Endothelial cell of umbilical vein (primary cell): ENCODE measurements at regions of chr1 and their contacts with region 1.

Region 1: DNA sequence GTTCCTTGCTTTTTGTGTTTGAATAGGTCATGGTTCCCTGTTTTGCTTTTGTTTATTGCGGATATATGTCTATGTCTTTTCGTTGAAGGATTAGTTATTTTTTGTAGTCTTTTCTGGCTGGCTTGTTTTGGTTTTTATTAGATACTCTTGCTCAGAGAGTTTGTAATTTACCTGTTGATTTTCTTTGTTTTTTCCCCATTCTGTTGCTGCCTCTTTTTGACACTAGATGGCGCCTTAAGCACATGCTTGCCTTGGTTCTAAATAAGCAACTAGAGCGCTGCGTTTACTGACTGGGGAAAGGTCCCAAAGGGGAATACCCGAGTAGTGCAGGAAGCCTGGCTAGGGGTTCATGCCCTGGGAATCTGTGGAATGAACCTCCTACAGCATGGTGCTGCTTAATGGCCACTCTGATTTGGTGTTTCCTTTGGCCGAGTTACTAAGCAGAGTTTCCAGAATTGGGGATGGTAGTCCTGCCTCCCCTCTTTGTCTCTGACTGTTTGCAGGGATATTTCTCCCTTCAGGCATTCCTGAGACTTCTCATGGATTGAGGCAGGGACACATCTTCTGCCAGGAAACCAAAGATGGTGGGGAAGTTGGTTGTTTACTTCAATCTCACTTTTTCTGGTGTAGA is 143.2 kb downstream of the PTPRU start:
- DNase-seq: peak; percentile 65
- H3K4me3 ChIP-seq: no peak overlapping the region
- H3K27ac ChIP-seq: no peak overlapping the region
- H3K4me1 ChIP-seq: peaks cover 13% of the 10 kb centered on the region
- H3K27me3 ChIP-seq: no peaks in the 10 kb centered on the region
- CTCF ChIP-seq: peak; percentile 62 to 68
- POLR2A ChIP-seq: no peak

Region 2: DNA sequence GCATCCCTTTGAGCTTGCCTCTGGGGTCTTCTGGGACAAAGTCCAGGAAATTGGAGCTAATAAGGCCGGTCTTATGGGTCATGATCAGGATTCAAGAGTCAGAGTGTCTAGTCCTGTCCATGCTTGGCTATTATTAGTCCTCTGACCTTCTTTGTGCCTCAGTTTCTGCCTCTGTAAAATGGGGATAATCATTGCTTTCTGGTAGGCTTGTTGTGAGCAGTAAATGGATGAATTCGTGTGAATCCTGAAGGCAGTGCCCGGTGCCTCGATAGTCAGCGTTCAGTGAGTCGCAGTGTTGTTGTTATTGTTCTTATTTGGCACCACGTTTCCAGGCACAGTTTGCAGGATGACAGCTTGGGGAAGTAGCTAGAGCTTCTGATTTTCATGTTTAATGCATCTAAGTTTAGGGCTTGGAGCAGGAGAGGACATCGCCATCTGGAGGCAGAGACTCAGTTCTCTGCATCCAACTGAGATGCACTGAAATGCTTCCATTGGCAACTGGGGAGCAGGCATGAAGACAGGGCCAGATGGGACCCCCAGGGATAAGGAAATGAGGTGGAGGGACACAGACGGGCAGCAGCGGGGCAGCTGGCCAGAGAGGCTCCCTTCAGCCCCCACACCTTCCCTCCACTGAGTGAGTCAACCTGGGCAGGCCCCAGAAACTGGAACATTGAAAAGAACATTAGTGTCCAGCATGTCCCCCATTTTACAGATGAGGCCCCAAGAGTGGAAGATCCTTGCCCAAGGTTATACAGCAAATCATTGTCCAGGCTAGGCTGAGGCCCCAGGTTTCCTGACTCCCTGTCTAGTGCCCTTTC is 17.1 kb after region 1 on chr1:
- CTCF ChIA-PET with region 1: interaction called, 25 read pairs
- POLR2A ChIA-PET with region 1: no interaction called
- dilution Hi-C with region 1: no loop called
- intact Hi-C with region 1: no loop called
- DNase-seq: no peak
- H3K4me3 ChIP-seq: no peak overlapping the region
- H3K27ac ChIP-seq: no peak overlapping the region
- H3K4me1 ChIP-seq: no peaks in the 10 kb centered on the region
- H3K27me3 ChIP-seq: no peaks in the 10 kb centered on the region
- CTCF ChIP-seq: peak in 1 of 2 donors; percentile 16
- POLR2A ChIP-seq: no peak

Region 3: GRCh38 chr1:29698033-29698432 is 318.5 kb after region 1 on chr1:
- CTCF ChIA-PET with region 1: interaction called, 9 read pairs
- POLR2A ChIA-PET with region 1: no interaction called
- dilution Hi-C with region 1: no loop called
- intact Hi-C with region 1: loop called (anchors 2 kb)
- DNase-seq: no peak
- H3K4me3 ChIP-seq: no peak overlapping the region
- H3K27ac ChIP-seq: no peak overlapping the region
- H3K4me1 ChIP-seq: no peaks in the 10 kb centered on the region
- H3K27me3 ChIP-seq: peaks cover 0 to 4% of the 10 kb centered on the region in 2 experiments
- CTCF ChIP-seq: peak; percentile 36 to 50
- POLR2A ChIP-seq: no peak

Region 4: DNA sequence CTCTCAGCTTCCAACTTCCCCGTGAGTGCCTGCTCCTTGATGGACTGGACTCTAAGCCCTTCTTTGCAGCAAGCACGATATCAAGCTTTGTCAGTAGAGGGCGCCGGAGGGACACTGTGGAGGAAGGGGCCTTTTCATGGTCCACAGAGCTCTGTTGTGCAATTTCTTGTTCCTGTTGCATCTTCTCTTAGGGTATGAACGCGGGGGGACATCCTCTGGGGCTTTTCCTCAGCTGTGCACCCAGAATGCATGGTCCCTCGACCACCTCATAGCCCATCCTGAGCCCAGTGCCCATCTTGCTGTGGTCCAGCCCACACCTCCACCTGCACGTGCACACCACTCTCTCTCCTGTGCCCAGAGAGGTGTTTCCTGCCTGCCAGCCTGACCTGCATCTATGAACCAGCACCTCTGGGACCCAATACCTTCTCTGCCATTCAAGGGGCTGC is 413.6 kb after region 1 on chr1:
- CTCF ChIA-PET with region 1: interaction called, 4 read pairs
- POLR2A ChIA-PET with region 1: no interaction called
- dilution Hi-C with region 1: no loop called
- intact Hi-C with region 1: loop called (anchors 2 kb)
- DNase-seq: peak; percentile 72
- H3K4me3 ChIP-seq: no peak overlapping the region
- H3K27ac ChIP-seq: no peak overlapping the region
- H3K4me1 ChIP-seq: no peaks in the 10 kb centered on the region
- H3K27me3 ChIP-seq: no peaks in the 10 kb centered on the region
- CTCF ChIP-seq: peak; percentile 75 to 87
- POLR2A ChIP-seq: no peak

Region 5: DNA sequence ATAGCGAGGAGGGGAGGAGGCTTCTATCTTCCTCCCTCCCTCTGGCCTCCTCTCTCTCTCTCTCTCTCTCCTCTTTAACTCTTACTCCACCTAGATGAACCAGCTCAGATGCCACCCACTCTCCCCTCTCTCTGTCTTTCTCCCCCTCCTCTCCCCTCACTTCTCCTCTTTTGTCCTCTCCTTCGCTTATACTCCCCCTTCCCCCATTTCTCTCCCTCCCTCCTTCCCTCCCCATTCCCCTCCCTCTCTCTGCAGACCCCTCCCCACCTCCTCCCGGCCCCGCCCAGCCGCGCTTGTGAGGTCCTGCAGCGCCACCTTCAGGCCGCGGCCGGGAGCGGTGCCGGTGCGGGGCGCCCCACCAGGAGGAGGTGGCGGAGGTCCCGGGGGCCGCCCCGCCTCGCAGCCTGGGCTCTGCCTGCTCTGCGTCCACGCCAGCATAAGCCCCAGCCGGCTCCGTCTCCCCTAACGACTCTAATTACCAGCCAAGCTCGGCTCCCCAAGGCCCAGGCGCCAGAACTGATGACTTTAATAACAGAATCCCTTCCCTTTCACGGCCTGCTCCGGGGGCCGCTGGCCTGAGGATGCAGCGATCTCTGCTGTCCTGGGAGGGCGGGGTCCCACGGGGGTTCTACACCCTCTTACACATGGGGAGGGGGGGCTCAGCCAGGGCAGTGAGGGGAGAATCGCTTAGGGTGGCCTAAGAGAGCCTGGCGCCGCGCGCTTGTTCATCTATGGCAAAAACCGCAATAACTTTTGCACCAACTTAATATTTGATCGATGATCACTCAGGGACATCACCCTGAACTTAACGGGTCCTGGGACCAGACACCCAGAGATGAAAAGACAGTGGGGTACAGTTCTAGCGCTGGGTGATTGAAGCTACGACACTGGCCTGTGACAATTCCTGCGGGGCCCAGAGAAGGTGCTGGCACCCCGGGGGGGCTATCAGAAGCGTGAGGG is 706.5 kb after region 1 on chr1:
- CTCF ChIA-PET with region 1: interaction called, 3 read pairs
- POLR2A ChIA-PET with region 1: no interaction called
- dilution Hi-C with region 1: no loop called
- intact Hi-C with region 1: loop called (anchors 1 kb)
- DNase-seq: peak; percentile 17
- H3K4me3 ChIP-seq: no peak overlapping the region
- H3K27ac ChIP-seq: no peak overlapping the region
- H3K4me1 ChIP-seq: peaks cover 17% of the 10 kb centered on the region
- H3K27me3 ChIP-seq: no peaks in the 10 kb centered on the region
- CTCF ChIP-seq: peak; percentile 52 to 64
- POLR2A ChIP-seq: no peak

Region 6: GRCh38 chr1:30111431-30111830 is 731.9 kb after region 1 on chr1:
- CTCF ChIA-PET with region 1: no interaction called
- POLR2A ChIA-PET with region 1: no interaction called
- dilution Hi-C with region 1: no loop called
- intact Hi-C with region 1: loop called (anchors 1 kb)
- DNase-seq: peak; percentile 18
- H3K4me3 ChIP-seq: no peak overlapping the region
- H3K27ac ChIP-seq: no peak overlapping the region
- H3K4me1 ChIP-seq: no peaks in the 10 kb centered on the region
- H3K27me3 ChIP-seq: peaks cover 0 to 1% of the 10 kb centered on the region in 2 experiments
- CTCF ChIP-seq: peak; percentile 53 to 56
- POLR2A ChIP-seq: no peak

Region 7: GRCh38 chr1:30302858-30303786 is 923.6 kb after region 1 on chr1:
- CTCF ChIA-PET with region 1: no interaction called
- POLR2A ChIA-PET with region 1: no interaction called
- dilution Hi-C with region 1: no loop called
- intact Hi-C with region 1: no loop called
- DNase-seq: no peak
- H3K4me3 ChIP-seq: no peak overlapping the region
- H3K27ac ChIP-seq: no peak overlapping the region
- H3K4me1 ChIP-seq: no peaks in the 10 kb centered on the region
- H3K27me3 ChIP-seq: no peaks in the 10 kb centered on the region
- CTCF ChIP-seq: no peak
- POLR2A ChIP-seq: no peak